ENCODE measurements at regions of chr17 and their contacts with region 1.

Region 1: GRCh38 chr17:68972119-68972704 is 17.0 kb upstream of the ABCA8 start:
- DNase-seq: peak in 1 of 3 donors; percentile 5
- ATAC-seq: peak in 1 of 2 donors; percentile 64
- H3K4me3 ChIP-seq: no peak overlapping the region
- H3K27ac ChIP-seq: no peak overlapping the region
- H3K4me1 ChIP-seq: no peaks in the 10 kb centered on the region
- H3K27me3 ChIP-seq: no peaks in the 10 kb centered on the region

Region 2: GRCh38 chr17:68771867-68772515 is 200.2 kb before region 1 on chr17:
- intact Hi-C with region 1: loop called (anchors 5 to 10 kb)
- DNase-seq: no peak
- ATAC-seq: peak; percentile 82 to 85
- H3K4me3 ChIP-seq: no peak overlapping the region
- H3K27ac ChIP-seq: peak overlapping the region; percentile 30
- H3K4me1 ChIP-seq: no peaks in the 10 kb centered on the region
- H3K27me3 ChIP-seq: no peaks in the 10 kb centered on the region

Region 3: DNA sequence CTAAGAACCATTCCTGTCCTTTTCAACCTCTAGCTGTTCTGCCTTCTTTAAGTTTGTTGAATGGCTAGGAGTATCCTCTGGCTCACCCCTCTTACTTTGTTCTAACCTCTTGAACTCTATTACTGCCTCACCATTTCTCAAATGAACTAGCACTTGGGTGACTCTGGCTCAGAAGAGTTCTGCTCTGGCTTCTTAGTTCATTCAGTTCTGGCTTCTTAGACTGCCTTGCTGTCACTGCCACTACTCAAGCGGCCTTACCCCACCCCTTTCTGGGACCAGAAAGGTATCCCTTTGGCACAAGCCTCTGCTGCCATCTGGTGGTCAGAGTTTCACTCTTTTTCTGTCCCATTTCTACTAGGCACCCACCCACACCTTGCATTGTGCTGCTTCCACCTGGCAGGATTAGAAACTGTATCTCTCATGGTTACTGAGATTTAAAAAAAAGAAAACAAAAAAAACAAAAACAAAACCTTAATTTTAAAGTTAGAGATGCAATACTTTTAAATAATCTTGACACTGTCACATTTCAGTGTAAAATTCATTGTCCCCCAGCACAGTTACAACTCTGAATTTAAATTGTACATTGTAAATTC is 263.2 kb after region 1 on chr17:
- intact Hi-C with region 1: loop called in 2 of 4 experiments (anchors 10 kb)
- DNase-seq: peak; percentile 84 to 88 (median 88)
- ATAC-seq: peak; percentile 94 to 96
- H3K4me3 ChIP-seq: no peak overlapping the region
- H3K27ac ChIP-seq: no peak overlapping the region
- H3K4me1 ChIP-seq: peaks cover 2% of the 10 kb centered on the region
- H3K27me3 ChIP-seq: no peaks in the 10 kb centered on the region